Naive thymus-derived CD8-positive, alpha-beta T cell (primary cell): ENCODE measurements at regions of chr3 and their contacts with region 1.

Region 1: GRCh38 chr3:141311496-141312353 is 56.6 kb upstream of the ZBTB38 start:
- DNase-seq: peak; percentile 90 to 99 (median 97)
- ATAC-seq: peak; percentile 90 to 91
- H3K4me3 Mint-ChIP-seq: peak overlapping the region; percentile 96 to 99 (median 98)
- H3K27ac Mint-ChIP-seq: peak overlapping the region; percentile 95 to 99 (median 98)
- H3K4me1 Mint-ChIP-seq: peaks cover 25 to 66% (median 56%) of the 10 kb centered on the region in 4 donors
- H3K27me3 Mint-ChIP-seq: no peaks in the 10 kb centered on the region

Region 2: GRCh38 chr3:141266797-141267555 is 44.7 kb before region 1 on chr3:
- POLR2A ChIA-PET with region 1: interaction called, 53 read pairs
- DNase-seq: peak; percentile 7 to 83 (median 42)
- ATAC-seq: peak; percentile 87 to 88
- H3K4me3 Mint-ChIP-seq: peak overlapping the region; percentile 81 to 96 (median 92)
- H3K27ac Mint-ChIP-seq: peak overlapping the region; percentile 94 to 99 (median 98)
- H3K4me1 Mint-ChIP-seq: peaks cover 36 to 71% (median 48%) of the 10 kb centered on the region in 4 donors
- H3K27me3 Mint-ChIP-seq: no peaks in the 10 kb centered on the region

Region 3: GRCh38 chr3:141402476-141403171 is 90.9 kb after region 1 on chr3:
- POLR2A ChIA-PET with region 1: interaction called, 17 read pairs
- DNase-seq: peak; percentile 29 to 74 (median 52)
- ATAC-seq: peak; percentile 69 to 75
- H3K4me3 Mint-ChIP-seq: peak overlapping the region; percentile 79 to 95 (median 92)
- H3K27ac Mint-ChIP-seq: peak overlapping the region; percentile 83 to 98 (median 96)
- H3K4me1 Mint-ChIP-seq: peaks cover 20 to 67% (median 45%) of the 10 kb centered on the region in 4 donors
- H3K27me3 Mint-ChIP-seq: no peaks in the 10 kb centered on the region

Region 4: GRCh38 chr3:141441381-141442364 is 129.9 kb after region 1 on chr3:
- POLR2A ChIA-PET with region 1: interaction called, 11 read pairs
- DNase-seq: peak; percentile 39 to 85 (median 66)
- ATAC-seq: peak; percentile 99 to 100
- H3K4me3 Mint-ChIP-seq: peak overlapping the region in 1 of 10 donors; percentile 19
- H3K27ac Mint-ChIP-seq: peak overlapping the region in 7 of 10 donors; percentile 8 to 84 (median 70)
- H3K4me1 Mint-ChIP-seq: peaks cover 9 to 32% (median 21%) of the 10 kb centered on the region in 4 donors
- H3K27me3 Mint-ChIP-seq: no peaks in the 10 kb centered on the region